CD4-positive, alpha-beta memory T cell (primary cell): ENCODE measurements at regions of chr19 and their contacts with region 1.

Region 1: GRCh38 chr19:48970923-48971395 is 5.8 kb downstream of the FTL start:
- DNase-seq: peak; percentile 67 to 77 (median 68)
- H3K4me3 ChIP-seq: no peak overlapping the region
- H3K4me3 Mint-ChIP-seq: peak overlapping the region in 1 of 8 donors; percentile 6
- H3K27ac ChIP-seq: no peak overlapping the region
- H3K27ac Mint-ChIP-seq: peak overlapping the region in 5 of 7 donors; percentile 27 to 80 (median 64)
- H3K4me1 ChIP-seq: peaks cover 19% of the 10 kb centered on the region
- H3K4me1 Mint-ChIP-seq: peaks cover 8 to 24% (median 17%) of the 10 kb centered on the region in 4 donors
- H3K27me3 ChIP-seq: no peaks in the 10 kb centered on the region
- H3K27me3 Mint-ChIP-seq: no peaks in the 10 kb centered on the region

Region 2: GRCh38 chr19:48784540-48784939 is 186.4 kb before region 1 on chr19:
- CTCF ChIA-PET with region 1: interaction called, 71 read pairs
- POLR2A ChIA-PET with region 1: interaction called, 8 read pairs
- intact Hi-C with region 1: loop called (anchors 1 kb)
- DNase-seq: no peak
- H3K4me3 ChIP-seq: no peak overlapping the region
- H3K4me3 Mint-ChIP-seq: peak overlapping the region in 1 of 8 donors; percentile 17
- H3K27ac ChIP-seq: no peak overlapping the region
- H3K27ac Mint-ChIP-seq: no peak overlapping the region
- H3K4me1 ChIP-seq: no peaks in the 10 kb centered on the region
- H3K4me1 Mint-ChIP-seq: peaks cover 0 to 5% (median 4%) of the 10 kb centered on the region in 4 donors
- H3K27me3 ChIP-seq: no peaks in the 10 kb centered on the region
- H3K27me3 Mint-ChIP-seq: peaks cover 10 to 14% of the 10 kb centered on the region in 2 donors

Region 3: GRCh38 chr19:48835734-48836088 is 135.2 kb before region 1 on chr19:
- CTCF ChIA-PET with region 1: interaction called, 8 read pairs
- POLR2A ChIA-PET with region 1: interaction called, 4 read pairs
- intact Hi-C with region 1: loop called (anchors 1 kb)
- DNase-seq: peak; percentile 87 to 91 (median 89)
- H3K4me3 ChIP-seq: peak overlapping the region in 1 of 2 donors; percentile 51
- H3K4me3 Mint-ChIP-seq: peak overlapping the region; percentile 77 to 91 (median 84)
- H3K27ac ChIP-seq: no peak overlapping the region
- H3K27ac Mint-ChIP-seq: peak overlapping the region in 6 of 7 donors; percentile 68 to 92 (median 86)
- H3K4me1 ChIP-seq: peaks cover 21% of the 10 kb centered on the region
- H3K4me1 Mint-ChIP-seq: peaks cover 15 to 21% (median 16%) of the 10 kb centered on the region in 4 donors
- H3K27me3 ChIP-seq: no peaks in the 10 kb centered on the region
- H3K27me3 Mint-ChIP-seq: peaks cover 4 to 14% of the 10 kb centered on the region in 2 donors

Region 4: GRCh38 chr19:48954595-48955310 is 16.2 kb before region 1 on chr19 and contains the start of gene BAX:
- CTCF ChIA-PET with region 1: interaction called, 15 read pairs
- POLR2A ChIA-PET with region 1: interaction called, 99 read pairs
- intact Hi-C with region 1: no loop called
- DNase-seq: peak; percentile 69 to 81 (median 74)
- H3K4me3 ChIP-seq: peak within 1 kb of the TSS; percentile 76 to 87
- H3K4me3 Mint-ChIP-seq: peak within 1 kb of the TSS; percentile 79 to 94 (median 90)
- H3K27ac ChIP-seq: peak within 1 kb of the TSS; percentile 86
- H3K27ac Mint-ChIP-seq: peak within 1 kb of the TSS; percentile 77 to 92 (median 86)
- H3K4me1 ChIP-seq: peaks cover 23% of the 10 kb centered on the region
- H3K4me1 Mint-ChIP-seq: peaks cover 12 to 34% (median 27%) of the 10 kb centered on the region in 4 donors
- H3K27me3 ChIP-seq: no peaks in the 10 kb centered on the region
- H3K27me3 Mint-ChIP-seq: no peaks in the 10 kb centered on the region
- total RNA-seq, gene BAX: 173 to 183 TPM

Region 5: GRCh38 chr19:49042177-49042576 is 71.2 kb after region 1 on chr19:
- CTCF ChIA-PET with region 1: no interaction called
- POLR2A ChIA-PET with region 1: no interaction called
- intact Hi-C with region 1: no loop called
- DNase-seq: no peak
- H3K4me3 ChIP-seq: no peak overlapping the region
- H3K4me3 Mint-ChIP-seq: no peak overlapping the region
- H3K27ac ChIP-seq: no peak overlapping the region
- H3K27ac Mint-ChIP-seq: peak overlapping the region in 1 of 7 donors; percentile 52
- H3K4me1 ChIP-seq: no peaks in the 10 kb centered on the region
- H3K4me1 Mint-ChIP-seq: no peaks in the 10 kb centered on the region
- H3K27me3 ChIP-seq: no peaks in the 10 kb centered on the region
- H3K27me3 Mint-ChIP-seq: no peaks in the 10 kb centered on the region

Region 6: GRCh38 chr19:49085020-49085867 is 114.3 kb after region 1 on chr19 and contains the start of gene SNRNP70:
- CTCF ChIA-PET with region 1: no interaction called
- POLR2A ChIA-PET with region 1: no interaction called
- intact Hi-C with region 1: no loop called
- DNase-seq: peak; percentile 99 to 100 (median 100)
- H3K4me3 ChIP-seq: peak within 1 kb of the TSS; percentile 72 to 95
- H3K4me3 Mint-ChIP-seq: peak within 1 kb of the TSS; percentile 82 to 96 (median 94)
- H3K27ac ChIP-seq: peak within 1 kb of the TSS; percentile 81
- H3K27ac Mint-ChIP-seq: peak within 1 kb of the TSS; percentile 88 to 98 (median 93)
- H3K4me1 ChIP-seq: peaks cover 32% of the 10 kb centered on the region
- H3K4me1 Mint-ChIP-seq: peaks cover 22 to 46% (median 32%) of the 10 kb centered on the region in 4 donors
- H3K27me3 ChIP-seq: no peaks in the 10 kb centered on the region
- H3K27me3 Mint-ChIP-seq: peaks cover 0 to 3% of the 10 kb centered on the region in 2 donors
- total RNA-seq, gene SNRNP70: 675 to 689 TPM

Region 7: GRCh38 chr19:49118565-49119410 is 147.8 kb after region 1 on chr19 and contains the start of gene C19orf73:
- CTCF ChIA-PET with region 1: no interaction called
- POLR2A ChIA-PET with region 1: no interaction called
- intact Hi-C with region 1: no loop called
- DNase-seq: peak; percentile 94 to 98 (median 97)
- H3K4me3 ChIP-seq: peak within 1 kb of the TSS; percentile 73 to 78
- H3K4me3 Mint-ChIP-seq: peak within 1 kb of the TSS; percentile 83 to 93 (median 88)
- H3K27ac ChIP-seq: peak within 1 kb of the TSS; percentile 79
- H3K27ac Mint-ChIP-seq: peak within 1 kb of the TSS; percentile 90 to 96 (median 94)
- H3K4me1 ChIP-seq: peaks cover 31% of the 10 kb centered on the region
- H3K4me1 Mint-ChIP-seq: peaks cover 22 to 42% (median 36%) of the 10 kb centered on the region in 4 donors
- H3K27me3 ChIP-seq: no peaks in the 10 kb centered on the region
- H3K27me3 Mint-ChIP-seq: no peaks in the 10 kb centered on the region
- total RNA-seq, gene C19orf73: 1.7 to 1.9 TPM